GM18951 (cell line): ENCODE measurements at regions of chr3 and their contacts with region 1.

Region 1: DNA sequence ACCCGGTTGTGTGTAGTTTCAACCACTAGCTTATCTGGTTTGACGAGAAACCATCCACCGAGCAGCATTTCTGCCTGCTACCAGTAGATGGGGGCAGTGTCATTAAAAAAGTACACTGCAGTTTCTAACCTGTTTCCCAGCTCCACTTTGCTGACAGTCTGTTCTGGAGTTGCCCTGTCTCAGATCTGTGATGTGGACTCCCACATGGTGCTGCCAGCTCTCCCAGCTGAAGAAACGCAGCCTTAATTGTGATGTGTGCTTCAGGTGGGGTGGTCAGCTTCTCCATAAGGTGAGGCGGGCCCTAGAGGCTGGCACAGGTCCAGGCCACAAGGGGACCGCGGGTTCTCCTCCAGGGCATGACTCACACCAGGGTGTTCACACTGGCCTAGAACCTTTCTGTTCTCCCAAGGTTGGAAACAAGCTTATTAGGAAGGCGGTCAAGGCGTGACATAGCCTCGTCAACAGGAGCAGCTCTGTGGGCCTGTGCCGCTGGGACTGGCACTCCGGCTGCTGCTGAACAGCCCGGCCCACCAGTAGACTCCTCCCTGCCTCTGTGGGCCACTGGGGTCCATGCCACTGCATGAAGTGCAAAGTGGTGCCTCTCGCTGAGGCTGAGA is 2.9 kb upstream of the FAM43A start:
- POLR2A ChIP-seq: no peak

Region 2: GRCh38 chr3:194422188-194422587 is 260.6 kb before region 1 on chr3:
- in situ Hi-C with region 1: no loop called
- POLR2A ChIP-seq: no peak

Region 3: DNA sequence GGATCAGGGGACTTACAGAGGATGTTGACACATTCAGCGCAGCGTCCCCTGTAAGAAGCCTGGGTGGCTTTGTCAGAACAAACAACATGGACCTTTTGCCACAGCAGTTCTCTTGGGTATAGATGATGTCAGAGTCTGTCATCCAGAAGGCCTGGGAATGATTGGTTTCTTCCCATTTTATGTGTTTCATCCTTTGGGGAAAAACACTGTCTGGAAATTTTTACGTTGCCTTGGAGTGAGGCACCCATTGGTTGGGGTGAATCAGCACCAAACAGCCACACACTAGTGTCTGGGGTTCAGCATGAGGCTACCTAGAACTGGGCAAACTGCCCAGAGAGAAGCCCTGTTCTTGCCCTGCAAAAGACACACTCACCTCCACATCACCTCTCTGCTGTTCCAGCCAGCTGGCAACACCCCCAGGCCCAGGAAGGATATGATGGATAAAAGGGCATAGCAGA is 125.9 kb after region 1 on chr3:
- in situ Hi-C with region 1: no loop called
- POLR2A ChIP-seq: no peak

Region 4: DNA sequence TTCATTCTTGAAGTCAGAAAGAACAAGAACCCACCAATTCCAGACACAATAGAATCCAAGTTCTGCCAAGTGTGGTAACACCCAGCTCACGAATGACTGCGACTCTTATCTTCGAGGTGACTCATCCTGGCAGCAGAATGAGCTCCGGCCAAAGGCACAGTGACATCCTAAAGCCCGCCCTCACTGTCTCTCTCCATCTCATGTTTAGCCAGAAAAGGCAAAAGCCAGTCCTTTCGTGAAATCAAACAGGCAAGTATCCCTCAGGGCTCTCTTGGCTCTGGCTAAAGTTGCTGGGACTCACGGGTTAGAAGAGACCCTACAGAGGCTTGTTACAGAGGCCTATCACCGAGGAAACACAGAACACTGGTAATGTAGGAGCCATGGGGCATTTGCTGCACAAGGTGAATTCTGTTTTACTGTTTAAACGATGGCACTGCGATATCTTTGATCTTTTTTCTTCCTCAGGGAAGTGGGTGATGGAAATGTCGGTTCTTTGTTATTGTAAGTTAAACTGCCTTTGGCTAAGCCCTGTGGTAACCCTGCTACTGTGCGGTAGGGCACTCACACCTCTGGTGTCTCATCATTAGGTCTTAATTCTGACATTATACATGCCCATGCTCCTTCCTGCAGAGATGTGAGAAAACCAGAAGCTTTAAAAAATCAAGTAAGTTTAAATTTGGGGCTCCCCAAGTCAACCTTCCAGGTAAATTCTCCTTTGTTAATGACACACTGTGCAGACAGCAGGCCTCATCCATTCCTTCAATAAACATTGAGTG is 158.5 kb after region 1 on chr3:
- in situ Hi-C with region 1: no loop called
- POLR2A ChIP-seq: no peak

Region 5: GRCh38 chr3:195106418-195106906 is 423.7 kb after region 1 on chr3:
- in situ Hi-C with region 1: loop called (anchors 10 kb)
- POLR2A ChIP-seq: no peak

Region 6: DNA sequence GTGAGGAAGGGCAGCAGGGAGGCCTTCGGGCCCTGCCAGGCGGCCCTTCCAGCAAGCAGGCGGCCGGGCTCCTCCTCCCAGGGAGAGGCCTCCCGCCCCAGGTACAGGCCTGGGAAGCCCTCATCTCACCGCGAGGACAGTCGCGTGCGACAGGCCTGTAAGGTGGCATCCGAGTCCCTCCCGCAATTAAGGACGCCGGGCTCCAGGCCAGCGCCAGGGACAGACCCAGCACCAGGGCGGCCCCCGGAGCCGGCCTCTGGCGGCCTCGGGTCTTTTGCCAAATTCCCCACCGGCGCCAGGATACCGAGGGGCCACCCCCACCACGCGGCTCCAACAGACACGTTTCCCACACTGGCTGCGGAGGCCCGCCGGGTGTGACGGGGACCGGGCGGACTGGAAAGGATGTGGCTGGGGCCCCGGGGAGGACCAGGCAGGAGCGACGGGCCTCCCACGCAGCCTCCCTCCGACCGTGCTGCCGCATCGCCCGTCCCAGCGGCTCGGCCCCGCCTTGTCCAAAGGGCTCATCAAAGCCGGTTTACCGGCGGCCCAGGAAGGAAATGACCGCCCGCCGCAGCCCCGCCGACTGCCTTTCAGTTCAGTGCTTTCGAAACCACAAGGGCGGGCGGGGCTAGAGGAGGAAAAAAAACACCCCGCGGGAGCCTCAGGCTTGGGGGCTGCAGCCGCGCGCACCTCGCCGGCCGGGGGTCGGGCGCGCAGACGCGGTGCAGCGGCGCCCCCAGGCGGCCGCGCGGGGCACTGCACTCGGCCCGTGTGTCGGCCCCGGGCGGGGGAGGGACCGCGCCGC is 576.9 kb after region 1 on chr3:
- in situ Hi-C with region 1: loop called (anchors 5 kb)
- POLR2A ChIP-seq: peak; percentile 76

Region 7: GRCh38 chr3:195542698-195543499 is 860.1 kb after region 1 on chr3 and contains the start of gene PPP1R2:
- in situ Hi-C with region 1: loop called (anchors 25 kb)
- POLR2A ChIP-seq: peak; percentile 98